Mammary epithelial cell (primary cell): ENCODE measurements at regions of chr10 and their contacts with region 1.

Region 1: GRCh38 chr10:124530215-124530665 is 68.6 kb downstream of the LHPP start:
- DNase-seq: peak; percentile 66
- H3K4me3 ChIP-seq: no peak overlapping the region
- H3K27ac ChIP-seq: no peak overlapping the region
- H3K4me1 ChIP-seq: peaks cover 15% of the 10 kb centered on the region
- H3K27me3 ChIP-seq: no peaks in the 10 kb centered on the region
- CTCF ChIP-seq: peak; percentile 91 to 97

Region 2: DNA sequence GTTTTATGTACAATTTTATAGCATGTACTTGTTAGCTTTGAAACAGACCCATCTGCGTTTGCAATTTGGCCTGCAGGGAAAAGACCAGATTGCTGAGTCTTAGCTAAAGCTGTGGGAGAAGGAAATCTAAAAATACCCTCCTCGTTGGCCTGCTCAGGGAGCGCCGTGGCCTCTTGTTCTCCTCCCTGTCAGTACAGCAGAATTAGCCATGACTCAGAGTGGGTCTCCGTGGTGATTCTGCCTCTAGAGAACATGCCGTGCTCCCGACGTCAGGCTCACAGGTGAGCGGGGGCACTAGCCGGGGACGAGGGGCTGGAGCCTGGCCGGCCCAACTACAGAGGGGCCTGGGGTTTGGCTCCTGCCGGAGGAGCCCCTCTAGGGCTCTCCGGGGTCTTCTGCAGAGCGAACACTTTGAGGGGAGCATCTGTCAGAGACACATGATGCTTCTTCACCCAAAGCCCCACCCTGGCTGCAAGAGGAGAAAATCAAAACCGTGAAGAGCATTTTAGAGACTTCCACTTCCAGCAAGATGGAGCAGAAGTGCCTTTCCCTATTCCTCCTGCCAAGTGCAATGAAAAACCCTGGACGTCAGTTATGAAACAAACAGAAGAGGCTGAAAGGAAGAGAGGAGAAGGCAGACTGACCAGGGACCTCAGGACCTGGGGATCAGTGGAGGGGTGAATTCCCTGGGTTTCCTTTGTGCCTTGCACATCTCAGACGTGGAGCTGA is 30.3 kb after region 1 on chr10:
- CTCF ChIA-PET with region 1: no interaction called
- dilution Hi-C with region 1: no loop called
- in situ Hi-C with region 1: no loop called
- intact Hi-C with region 1: no loop called
- DNase-seq: no peak
- H3K4me3 ChIP-seq: no peak overlapping the region
- H3K27ac ChIP-seq: no peak overlapping the region
- H3K4me1 ChIP-seq: peaks cover 3% of the 10 kb centered on the region
- H3K27me3 ChIP-seq: no peaks in the 10 kb centered on the region
- CTCF ChIP-seq: no peak

Region 3: DNA sequence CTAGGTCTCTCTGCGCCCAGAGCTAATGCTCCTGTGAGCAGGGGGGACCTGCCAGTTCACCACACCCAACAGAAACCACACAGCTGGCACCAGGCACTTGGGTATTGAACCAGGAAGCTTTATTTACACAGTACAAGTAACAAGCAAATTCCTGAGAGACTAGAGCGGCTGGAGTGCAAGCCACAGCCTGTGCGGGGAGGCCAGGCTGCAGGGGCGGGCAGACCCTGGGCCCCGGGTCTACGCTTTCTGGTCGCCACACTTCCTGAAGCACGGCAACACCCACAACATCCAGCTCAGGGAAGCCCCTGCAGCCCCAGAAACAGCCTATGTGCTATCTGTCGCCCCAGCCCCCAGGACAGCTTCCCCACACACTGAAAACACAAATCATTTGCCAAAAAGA is 89.0 kb after region 1 on chr10:
- CTCF ChIA-PET with region 1: no interaction called
- dilution Hi-C with region 1: loop called (anchors 5 kb)
- in situ Hi-C with region 1: no loop called
- intact Hi-C with region 1: no loop called
- DNase-seq: peak; percentile 61
- H3K4me3 ChIP-seq: peak overlapping the region in 1 of 3 experiments; percentile 17
- H3K27ac ChIP-seq: peak overlapping the region; percentile 48
- H3K4me1 ChIP-seq: peaks cover 27% of the 10 kb centered on the region
- H3K27me3 ChIP-seq: no peaks in the 10 kb centered on the region
- CTCF ChIP-seq: no peak

Region 4: GRCh38 chr10:124732931-124733570 is 202.8 kb after region 1 on chr10:
- CTCF ChIA-PET with region 1: no interaction called
- dilution Hi-C with region 1: no loop called
- in situ Hi-C with region 1: loop called in 1 of 2 experiments (anchors 10 kb)
- intact Hi-C with region 1: no loop called
- DNase-seq: peak; percentile 76
- H3K4me3 ChIP-seq: no peak overlapping the region
- H3K27ac ChIP-seq: peak overlapping the region; percentile 77
- H3K4me1 ChIP-seq: peaks cover 50% of the 10 kb centered on the region
- H3K27me3 ChIP-seq: no peaks in the 10 kb centered on the region
- CTCF ChIP-seq: no peak

Region 5: GRCh38 chr10:124983255-124983705 is 453.0 kb after region 1 on chr10:
- CTCF ChIA-PET with region 1: no interaction called
- dilution Hi-C with region 1: no loop called
- in situ Hi-C with region 1: no loop called
- intact Hi-C with region 1: loop called (anchors 10 kb)
- DNase-seq: no peak
- H3K4me3 ChIP-seq: no peak overlapping the region
- H3K27ac ChIP-seq: no peak overlapping the region
- H3K4me1 ChIP-seq: no peaks in the 10 kb centered on the region
- H3K27me3 ChIP-seq: no peaks in the 10 kb centered on the region
- CTCF ChIP-seq: no peak

Region 6: DNA sequence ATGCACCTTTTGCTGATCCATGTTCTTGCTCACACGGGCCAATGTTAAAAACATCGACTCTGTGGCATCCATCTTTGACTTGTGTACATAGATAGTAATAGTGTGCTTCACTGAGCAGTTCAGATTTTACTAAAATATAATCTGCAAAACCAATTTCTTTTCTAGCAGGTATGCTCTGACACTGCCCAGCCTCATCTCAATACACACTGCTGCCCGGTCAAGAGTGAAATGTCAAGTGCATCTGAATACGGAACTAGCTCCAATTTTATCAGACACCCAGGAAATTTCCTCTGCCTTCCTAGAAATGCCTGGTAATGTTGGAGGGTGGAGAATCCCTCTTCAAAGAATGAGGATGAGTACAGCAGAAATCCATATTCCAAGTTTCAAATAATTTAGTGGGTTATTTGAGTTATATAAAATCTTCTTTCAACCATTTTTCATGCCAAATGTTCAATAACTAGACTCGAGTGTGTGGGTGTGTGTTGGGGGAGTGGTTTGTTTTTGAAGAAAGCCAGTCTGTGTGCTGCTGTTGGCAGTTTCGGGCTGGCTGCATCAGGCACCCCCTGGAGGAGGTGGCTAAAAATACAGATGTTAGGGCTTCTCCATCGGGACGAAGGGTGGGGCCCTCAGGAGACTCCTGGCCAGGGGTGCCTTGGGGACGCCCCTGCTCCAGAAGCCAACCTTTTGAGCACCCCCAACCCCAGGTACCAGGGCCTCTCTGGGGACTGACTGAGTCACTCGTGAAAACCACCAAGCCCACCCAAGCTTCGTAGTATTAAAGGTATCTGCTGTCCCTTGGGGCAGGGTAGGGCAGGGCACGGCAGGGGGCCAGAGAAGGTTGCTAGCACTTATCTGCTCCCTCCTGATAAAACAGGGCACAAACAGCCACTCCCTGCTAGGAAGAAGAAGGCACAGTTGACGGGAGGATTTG is 614.7 kb after region 1 on chr10:
- CTCF ChIA-PET with region 1: no interaction called
- dilution Hi-C with region 1: no loop called
- in situ Hi-C with region 1: no loop called
- intact Hi-C with region 1: loop called (anchors 5 kb)
- DNase-seq: peak; percentile 65
- H3K4me3 ChIP-seq: no peak overlapping the region
- H3K27ac ChIP-seq: peak overlapping the region; percentile 34
- H3K4me1 ChIP-seq: peaks cover 46% of the 10 kb centered on the region
- H3K27me3 ChIP-seq: no peaks in the 10 kb centered on the region
- CTCF ChIP-seq: peak; percentile 35 to 70